HepG2 (cell line): ENCODE measurements at regions of chr19 and their contacts with region 1.

Region 1: DNA sequence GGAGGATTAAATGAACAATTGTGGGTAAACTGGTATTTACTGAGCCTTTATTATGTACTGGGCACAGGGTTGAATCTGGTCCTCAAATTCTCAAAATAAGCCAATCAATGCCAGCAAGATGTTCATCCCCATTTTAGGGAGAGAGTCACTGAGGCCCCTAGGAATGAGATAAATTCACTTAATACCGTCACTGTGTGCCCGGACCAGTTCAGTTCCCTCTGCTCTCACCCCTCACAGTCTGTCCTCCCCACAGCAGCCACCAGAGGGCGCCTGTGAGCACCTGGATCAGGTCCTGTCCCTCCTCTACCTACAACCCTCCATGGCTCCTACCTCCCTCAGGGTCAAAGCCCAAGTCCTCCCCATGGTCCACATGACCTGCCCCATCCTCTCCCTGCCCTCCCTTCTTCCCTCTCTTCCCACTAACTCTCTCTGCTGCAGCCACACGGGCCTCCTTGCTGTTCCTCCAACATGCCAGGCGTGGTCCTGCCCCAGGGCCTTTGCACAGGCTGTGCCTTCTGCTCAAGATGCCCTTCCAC is 42.0 kb upstream of the NFIC start:
- DNase-seq: peak; percentile 52
- ATAC-seq: peak; percentile 80
- H3K4me3 ChIP-seq: no peak overlapping the region
- H3K27ac ChIP-seq: no peak overlapping the region
- H3K4me1 ChIP-seq: no peaks in the 10 kb centered on the region
- H3K27me3 ChIP-seq: peaks cover 0 to 14% of the 10 kb centered on the region in 2 experiments; a peak in 2 of 5 replicates
- CTCF ChIP-seq: peak; percentile 74
- EP300 ChIP-seq: no peak
- POLR2A ChIP-seq: no peak
- RAD21 ChIP-seq: peak; percentile 49; the same call in 1 of the 2 replicates

Region 2: GRCh38 chr19:3357992-3358688 is 33.8 kb after region 1 on chr19:
- CTCF ChIA-PET with region 1: no interaction called
- POLR2A ChIA-PET with region 1: no interaction called
- in situ Hi-C with region 1: no loop called
- intact Hi-C with region 1: no loop called
- DNase-seq: no peak
- ATAC-seq: peak; percentile 30
- H3K4me3 ChIP-seq: peak overlapping the region; percentile 66 to 80 (median 68)
- H3K27ac ChIP-seq: no peak overlapping the region
- H3K4me1 ChIP-seq: peaks cover 41% of the 10 kb centered on the region
- H3K27me3 ChIP-seq: peaks cover 3 to 9% of the 10 kb centered on the region in 2 experiments; a peak in 4 of 5 replicates
- CTCF ChIP-seq: 0 out of 2 replicates have a peak, but pooled peaks have one; percentile 12
- EP300 ChIP-seq: no peak
- POLR2A ChIP-seq: no peak
- RAD21 ChIP-seq: no peak

Region 3: DNA sequence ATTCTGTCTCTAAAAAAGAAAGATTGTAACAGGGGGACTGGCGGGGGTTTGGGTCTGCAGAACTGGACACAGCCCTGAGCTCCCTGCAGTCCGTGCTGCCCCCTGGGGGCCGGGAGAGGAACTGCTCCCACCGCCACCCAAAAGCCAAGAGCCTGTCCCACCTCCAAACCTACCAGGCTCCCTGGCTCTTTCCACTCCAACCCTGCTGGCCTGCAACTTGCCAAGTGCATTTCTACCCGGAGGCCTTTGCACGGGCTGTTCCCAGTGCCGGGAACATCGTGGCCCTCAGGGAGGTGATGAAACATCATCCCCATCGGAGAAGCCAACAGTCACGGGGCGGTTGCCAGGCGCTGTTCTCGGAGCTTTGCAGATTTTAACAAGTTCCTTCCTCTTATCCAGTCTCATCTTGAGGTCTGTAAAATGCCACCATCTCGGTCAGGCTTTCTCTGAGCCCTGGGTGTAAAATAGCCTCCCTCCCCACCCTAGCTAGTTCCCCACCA is 105.2 kb after region 1 on chr19:
- CTCF ChIA-PET with region 1: interaction called, 42 read pairs
- POLR2A ChIA-PET with region 1: interaction called, 4 read pairs
- in situ Hi-C with region 1: no loop called
- intact Hi-C with region 1: loop called (anchors 1 kb)
- DNase-seq: peak; percentile 36
- ATAC-seq: peak; percentile 78
- H3K4me3 ChIP-seq: no peak overlapping the region
- H3K27ac ChIP-seq: no peak overlapping the region
- H3K4me1 ChIP-seq: peaks cover 14% of the 10 kb centered on the region
- H3K27me3 ChIP-seq: no peaks in the 10 kb centered on the region
- CTCF ChIP-seq: peak; percentile 90
- EP300 ChIP-seq: no peak
- POLR2A ChIP-seq: no peak
- RAD21 ChIP-seq: peak; percentile 93

Region 4: GRCh38 chr19:3440082-3440481 is 115.7 kb after region 1 on chr19:
- CTCF ChIA-PET with region 1: interaction called, 16 read pairs
- POLR2A ChIA-PET with region 1: no interaction called
- in situ Hi-C with region 1: no loop called
- intact Hi-C with region 1: loop called (anchors 1 kb)
- DNase-seq: peak; percentile 50
- ATAC-seq: peak; percentile 66
- H3K4me3 ChIP-seq: no peak overlapping the region
- H3K27ac ChIP-seq: no peak overlapping the region
- H3K4me1 ChIP-seq: peaks cover 22% of the 10 kb centered on the region
- H3K27me3 ChIP-seq: no peaks in the 10 kb centered on the region
- CTCF ChIP-seq: peak; percentile 79
- EP300 ChIP-seq: no peak
- POLR2A ChIP-seq: no peak
- RAD21 ChIP-seq: peak; percentile 78

Region 5: GRCh38 chr19:3471954-3472655 is 147.7 kb after region 1 on chr19:
- CTCF ChIA-PET with region 1: interaction called, 48 read pairs
- POLR2A ChIA-PET with region 1: no interaction called
- in situ Hi-C with region 1: loop called (anchors 5 kb)
- intact Hi-C with region 1: loop called (anchors 5 kb)
- DNase-seq: no peak
- ATAC-seq: peak; percentile 51
- H3K4me3 ChIP-seq: no peak overlapping the region
- H3K27ac ChIP-seq: no peak overlapping the region
- H3K4me1 ChIP-seq: peaks cover 12% of the 10 kb centered on the region
- H3K27me3 ChIP-seq: peaks cover 0 to 1% of the 10 kb centered on the region in 2 experiments; a peak in 1 of 5 replicates
- CTCF ChIP-seq: peak; percentile 84
- EP300 ChIP-seq: no peak
- POLR2A ChIP-seq: no peak
- RAD21 ChIP-seq: peak; percentile 72

Region 6: DNA sequence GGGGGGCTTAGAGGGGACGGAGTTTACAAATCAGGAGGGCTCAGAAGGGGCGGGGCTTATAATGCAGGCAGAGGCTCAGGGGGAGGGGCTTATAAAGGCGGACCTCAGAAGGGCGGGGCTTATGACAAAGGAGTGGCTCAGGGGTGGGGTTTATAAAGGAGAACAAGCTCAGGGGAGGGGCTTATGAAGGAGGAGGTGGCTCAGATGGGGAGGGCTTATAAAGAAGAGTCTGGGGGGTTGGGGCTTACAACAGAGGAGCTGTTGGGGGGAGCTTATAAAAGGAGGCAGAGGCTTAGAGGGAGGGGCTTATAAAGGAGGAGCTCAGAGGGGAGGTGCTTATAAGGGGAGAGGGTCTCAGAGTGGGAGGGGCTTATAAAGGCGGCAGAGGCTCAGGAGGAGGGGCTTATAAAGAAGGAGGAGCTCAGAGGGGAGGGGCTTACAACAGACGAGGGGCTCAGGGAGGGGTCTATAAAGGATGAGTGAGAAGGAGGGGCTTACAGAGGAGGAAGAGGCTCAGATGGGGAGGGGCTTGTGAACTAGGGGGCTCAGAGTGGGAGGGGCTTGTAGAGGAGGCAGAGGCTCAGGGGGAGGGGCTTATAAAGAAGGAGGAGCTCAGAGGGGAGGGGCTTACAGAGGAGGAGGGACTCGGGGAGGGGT is 154.9 kb after region 1 on chr19:
- CTCF ChIA-PET with region 1: interaction called, 48 read pairs
- POLR2A ChIA-PET with region 1: no interaction called
- in situ Hi-C with region 1: loop called (anchors 5 kb)
- intact Hi-C with region 1: loop called (anchors 5 kb)
- DNase-seq: no peak
- ATAC-seq: no peak
- H3K4me3 ChIP-seq: no peak overlapping the region
- H3K27ac ChIP-seq: no peak overlapping the region
- H3K4me1 ChIP-seq: peaks cover 22% of the 10 kb centered on the region
- H3K27me3 ChIP-seq: no peaks in the 10 kb centered on the region
- CTCF ChIP-seq: no peak
- EP300 ChIP-seq: no peak
- POLR2A ChIP-seq: no peak
- RAD21 ChIP-seq: no peak